Panc1 (cell line): ENCODE measurements at regions of chr2 and their contacts with region 1.

Region 1: GRCh38 chr2:187453078-187453641 is 5.1 kb upstream of the CALCRL start:
- DNase-seq: peak; percentile 20
- ATAC-seq: no peak
- H3K4me3 ChIP-seq: no peak overlapping the region
- H3K27ac ChIP-seq: no peak overlapping the region; the same call in 1 of the 2 replicates
- H3K4me1 ChIP-seq: no peaks in the 10 kb centered on the region; the same call in 1 of the 2 replicates
- H3K27me3 ChIP-seq: no peaks in the 10 kb centered on the region
- CTCF ChIP-seq: peak; percentile 43; the same call in 1 of the 2 replicates

Region 2: DNA sequence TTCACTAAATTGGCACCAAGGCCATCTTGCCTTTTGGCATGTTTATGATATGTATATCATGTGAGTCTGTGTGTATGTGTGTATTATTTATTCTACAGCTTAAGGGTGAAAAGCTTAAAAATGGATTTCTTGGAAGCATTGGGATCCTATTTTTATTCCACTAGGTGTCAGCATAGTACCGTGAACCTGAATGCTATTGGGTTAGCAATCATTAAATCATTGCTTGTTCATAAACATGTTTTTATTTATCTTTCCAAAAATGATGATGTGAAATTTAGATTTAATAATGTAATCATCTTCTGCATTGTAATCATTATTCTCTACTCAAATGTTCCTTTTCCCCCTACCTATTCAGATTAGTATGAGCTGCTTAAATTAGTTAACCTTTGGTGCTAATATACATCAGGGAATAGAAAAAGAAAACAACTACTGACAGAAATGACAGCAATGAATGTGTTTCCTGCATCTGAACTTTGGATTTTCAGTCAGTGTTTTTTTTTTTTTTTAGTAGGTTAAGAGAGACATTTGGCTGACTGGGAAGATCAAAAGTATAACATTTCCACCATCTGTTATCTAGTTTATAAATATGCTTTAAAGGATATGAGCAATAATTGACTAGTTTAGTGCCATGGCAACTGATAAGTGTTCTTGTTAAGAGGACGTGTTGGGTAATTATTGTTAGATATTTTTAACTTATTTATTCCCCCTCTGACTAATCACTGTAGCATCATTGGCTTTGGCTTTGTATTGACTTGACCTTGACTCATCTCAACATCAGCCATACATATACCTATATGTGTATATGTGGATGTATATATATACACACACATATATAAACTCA is 590.1 kb before region 1 on chr2:
- CTCF ChIA-PET with region 1: interaction called, 4 read pairs
- POLR2A ChIA-PET with region 1: no interaction called
- in situ Hi-C with region 1: no loop called
- intact Hi-C with region 1: loop called (anchors 2 kb)
- DNase-seq: no peak
- ATAC-seq: peak; percentile 75; the same call in 1 of the 2 replicates
- H3K4me3 ChIP-seq: no peak overlapping the region
- H3K27ac ChIP-seq: no peak overlapping the region
- H3K4me1 ChIP-seq: no peaks in the 10 kb centered on the region
- H3K27me3 ChIP-seq: no peaks in the 10 kb centered on the region
- CTCF ChIP-seq: peak; percentile 76; the same call in 1 of the 2 replicates

Region 3: GRCh38 chr2:186903216-186903615 is 549.9 kb before region 1 on chr2:
- CTCF ChIA-PET with region 1: interaction called, 3 read pairs
- POLR2A ChIA-PET with region 1: no interaction called
- in situ Hi-C with region 1: no loop called
- intact Hi-C with region 1: loop called (anchors 5 kb)
- DNase-seq: no peak
- ATAC-seq: no peak
- H3K4me3 ChIP-seq: no peak overlapping the region
- H3K27ac ChIP-seq: no peak overlapping the region
- H3K4me1 ChIP-seq: no peaks in the 10 kb centered on the region
- H3K27me3 ChIP-seq: no peaks in the 10 kb centered on the region
- CTCF ChIP-seq: peak; percentile 67; the same call in 1 of the 2 replicates

Region 4: DNA sequence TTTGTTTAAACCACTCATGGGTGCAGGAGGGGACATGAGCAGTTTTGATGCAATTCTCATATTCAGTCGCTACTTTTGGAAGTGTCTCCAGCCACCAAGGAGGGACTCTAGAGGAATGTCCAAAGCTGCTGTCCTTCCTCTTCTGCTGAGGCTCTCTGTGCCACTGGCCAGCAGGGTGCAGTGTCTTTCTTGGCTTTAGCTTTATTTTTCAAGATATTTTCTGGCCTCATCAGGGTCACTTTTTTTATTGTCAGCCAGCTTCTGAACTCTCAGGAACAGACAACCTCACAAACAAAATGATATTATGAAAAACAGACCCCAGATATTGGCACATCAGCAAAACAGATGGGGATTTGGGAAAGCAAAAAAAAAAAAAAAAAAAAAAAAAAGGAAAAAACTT is 314.9 kb before region 1 on chr2:
- CTCF ChIA-PET with region 1: interaction called, 3 read pairs
- POLR2A ChIA-PET with region 1: no interaction called
- in situ Hi-C with region 1: no loop called
- intact Hi-C with region 1: loop called (anchors 2 kb)
- DNase-seq: peak; percentile 12
- ATAC-seq: peak; percentile 71; the same call in 1 of the 2 replicates
- H3K4me3 ChIP-seq: no peak overlapping the region
- H3K27ac ChIP-seq: no peak overlapping the region
- H3K4me1 ChIP-seq: no peaks in the 10 kb centered on the region
- H3K27me3 ChIP-seq: no peaks in the 10 kb centered on the region
- CTCF ChIP-seq: peak; percentile 82

Region 5: DNA sequence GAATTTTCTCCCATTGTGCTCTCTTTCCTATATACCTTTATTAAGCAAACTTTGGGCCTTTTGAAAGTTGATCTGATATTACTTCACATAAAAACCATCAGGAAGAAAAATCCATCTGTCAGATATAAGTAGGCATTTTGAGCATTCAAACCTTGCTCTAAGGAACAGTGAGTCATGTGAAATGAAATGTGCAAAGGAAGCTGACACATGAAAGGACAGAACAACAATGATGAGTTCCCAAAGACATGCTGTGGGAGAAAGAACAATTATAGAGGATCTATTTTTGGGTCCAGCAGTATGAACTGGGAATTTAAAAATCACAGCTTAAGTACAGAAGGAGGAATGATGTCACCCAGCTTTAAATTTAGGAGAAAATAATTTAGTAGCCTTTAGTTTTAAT is 23.2 kb before region 1 on chr2:
- CTCF ChIA-PET with region 1: no interaction called
- POLR2A ChIA-PET with region 1: interaction called, 21 read pairs
- in situ Hi-C with region 1: no loop called
- intact Hi-C with region 1: no loop called
- DNase-seq: no peak
- ATAC-seq: no peak
- H3K4me3 ChIP-seq: no peak overlapping the region
- H3K27ac ChIP-seq: no peak overlapping the region
- H3K4me1 ChIP-seq: no peaks in the 10 kb centered on the region
- H3K27me3 ChIP-seq: no peaks in the 10 kb centered on the region
- CTCF ChIP-seq: no peak